Right ventricle myocardium inferior (tissue), 1 donor: ENCODE measurements at regions of chr10 and their contacts with region 1.

Region 1: GRCh38 chr10:7260412-7260900 is 150.4 kb downstream of the SFMBT2 start:
- DNase-seq: no peak
- ATAC-seq: peak; percentile 98

Region 2: GRCh38 chr10:7318836-7319235 is 58.4 kb after region 1 on chr10:
- intact Hi-C with region 1: loop called (anchors 10 kb)
- DNase-seq: no peak
- ATAC-seq: peak; percentile 32

Region 3: GRCh38 chr10:7340179-7340874 is 79.9 kb after region 1 on chr10:
- intact Hi-C with region 1: loop called (anchors 2 kb)
- DNase-seq: no peak
- ATAC-seq: peak; percentile 90

Region 4: DNA sequence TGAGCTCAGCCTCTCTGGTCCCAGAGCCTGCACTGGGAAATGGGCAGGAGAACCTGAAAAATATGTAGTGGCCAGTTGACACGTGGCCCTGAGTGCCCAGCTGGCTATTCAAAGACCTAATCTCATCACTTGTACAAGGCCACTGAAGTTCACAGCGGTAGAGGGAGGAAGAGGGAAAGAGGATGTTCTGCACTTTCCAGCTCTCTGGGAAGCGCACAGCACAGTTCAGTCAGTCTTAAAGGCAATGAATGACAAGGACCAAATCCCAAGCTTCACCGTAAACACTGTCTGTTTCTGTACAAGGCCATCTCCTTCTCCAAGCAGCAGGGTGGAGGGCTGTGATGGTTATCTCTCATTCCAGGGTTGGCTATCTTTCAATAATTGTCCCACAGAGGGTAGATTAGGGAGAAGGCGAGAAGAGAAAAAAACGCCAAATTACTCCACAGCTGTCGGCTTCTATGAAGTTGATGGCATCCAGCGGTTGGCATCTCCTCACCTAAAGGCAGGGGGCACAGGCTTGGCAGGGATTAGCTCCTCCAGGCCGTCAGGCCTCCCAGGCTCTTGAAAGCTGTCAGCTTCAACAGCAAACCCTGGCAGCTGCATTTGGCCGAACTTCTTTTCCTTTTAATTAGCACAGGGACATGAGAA is 139.7 kb after region 1 on chr10:
- intact Hi-C with region 1: loop called (anchors 2 kb)
- DNase-seq: no peak
- ATAC-seq: peak; percentile 70

Region 5: DNA sequence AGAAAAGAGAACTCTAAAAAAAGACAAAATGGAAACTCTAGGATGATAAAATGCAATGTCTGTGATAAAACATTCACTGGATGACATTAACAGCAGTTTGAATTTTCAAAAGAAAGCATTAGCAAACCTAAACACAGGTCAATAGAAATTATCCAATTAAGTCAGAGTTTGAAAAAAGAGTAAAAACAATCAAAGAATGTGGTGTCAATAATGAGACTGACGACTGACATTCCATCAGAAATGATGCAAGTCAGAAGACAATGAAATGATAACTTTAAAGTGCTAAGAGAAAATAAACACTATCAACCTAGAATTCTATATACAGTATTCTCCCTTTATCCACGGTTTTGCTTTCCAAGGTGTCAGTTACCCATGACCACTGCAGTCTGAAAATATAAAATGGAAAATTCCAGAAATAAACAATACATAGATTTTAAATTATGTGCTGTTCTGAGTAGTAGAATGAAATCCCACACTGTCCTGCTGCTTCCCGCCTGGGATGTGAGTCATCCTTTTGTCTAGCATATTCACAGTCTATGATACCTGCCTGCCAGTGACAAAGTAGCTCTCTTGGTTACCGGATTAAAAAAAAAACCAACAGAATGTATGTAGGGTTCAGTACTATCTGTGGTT is 188.7 kb after region 1 on chr10:
- intact Hi-C with region 1: no loop called
- DNase-seq: no peak
- ATAC-seq: no peak